IMR-90 (cell line): ENCODE measurements at regions of chr13 and their contacts with region 1.

Region 1: GRCh38 chr13:44577236-44578066 is 1.3 kb upstream of the TSC22D1 start:
- DNase-seq: peak; percentile 95
- ATAC-seq: peak; percentile 85
- H3K4me3 ChIP-seq: peak overlapping the region; percentile 80
- H3K27ac ChIP-seq: peak overlapping the region; percentile 91
- H3K4me1 ChIP-seq: peaks cover 24% of the 10 kb centered on the region
- H3K27me3 ChIP-seq: no peaks in the 10 kb centered on the region
- CTCF ChIP-seq: no peak
- POLR2A ChIP-seq: peak; percentile 86
- RAD21 ChIP-seq: no peak; the same call in 1 of the 2 replicates

Region 2: DNA sequence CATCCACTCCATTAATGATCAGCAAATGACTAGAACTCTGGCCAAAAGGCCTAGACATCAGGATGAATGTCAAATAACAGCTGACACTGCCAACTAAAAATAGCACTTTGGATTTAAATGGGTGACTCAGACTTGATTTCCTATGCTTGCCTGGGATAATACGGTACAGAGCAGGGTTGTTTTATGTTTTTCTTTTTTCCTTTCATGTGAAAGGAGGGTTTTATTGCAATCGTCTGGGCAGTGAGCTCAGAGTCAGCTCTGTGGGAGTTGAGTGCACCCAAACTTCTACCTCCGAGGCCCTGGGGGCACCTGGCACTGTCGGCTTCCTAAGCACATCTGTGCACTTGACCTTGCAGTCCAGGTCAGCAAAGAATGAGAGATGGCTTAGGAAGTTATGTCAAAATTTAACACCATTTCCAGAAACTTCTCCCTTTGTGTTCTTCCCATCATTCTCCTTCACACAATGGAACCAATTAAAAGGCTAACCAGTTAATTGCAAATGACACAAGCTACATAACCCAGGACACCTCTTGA is 563.6 kb before region 1 on chr13:
- CTCF ChIA-PET with region 1: no interaction called
- POLR2A ChIA-PET with region 1: no interaction called
- dilution Hi-C with region 1: no loop called
- in situ Hi-C with region 1: no loop called
- intact Hi-C with region 1: no loop called
- DNase-seq: peak; percentile 77
- ATAC-seq: peak; percentile 68
- H3K4me3 ChIP-seq: no peak overlapping the region
- H3K27ac ChIP-seq: no peak overlapping the region
- H3K4me1 ChIP-seq: 0 out of 2 replicates have a peak, but pooled peaks cover 2% of the 10 kb centered on the region
- H3K27me3 ChIP-seq: no peaks in the 10 kb centered on the region
- CTCF ChIP-seq: no peak
- POLR2A ChIP-seq: no peak
- RAD21 ChIP-seq: no peak

Region 3: DNA sequence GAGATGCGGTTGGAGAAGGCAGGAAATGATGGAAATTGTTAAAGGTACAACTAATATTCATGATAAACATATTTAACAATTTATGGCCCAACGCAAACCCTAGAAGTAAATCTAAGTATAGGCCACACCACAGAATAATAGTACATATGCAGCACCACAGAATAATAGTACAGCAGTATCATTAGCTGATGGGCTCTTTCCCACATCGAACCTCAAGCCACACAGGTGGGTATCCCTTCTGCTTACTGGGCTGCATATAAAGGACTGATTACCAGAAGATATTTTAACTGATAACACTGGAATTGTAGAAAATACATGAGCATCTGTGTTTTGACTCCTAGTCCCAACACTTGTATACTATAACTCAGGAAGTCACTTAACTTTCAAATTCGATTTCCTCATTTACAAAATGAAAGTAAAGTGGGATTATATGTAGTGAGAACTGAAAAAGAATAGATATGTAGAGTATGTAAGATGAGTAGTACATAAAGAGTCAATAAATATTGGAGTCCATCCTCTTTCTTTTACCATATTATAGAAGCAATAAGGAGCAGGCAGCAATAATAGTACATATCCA is 92.8 kb before region 1 on chr13:
- CTCF ChIA-PET with region 1: no interaction called
- POLR2A ChIA-PET with region 1: no interaction called
- dilution Hi-C with region 1: no loop called
- in situ Hi-C with region 1: no loop called
- intact Hi-C with region 1: loop called (anchors 2 kb)
- DNase-seq: no peak
- ATAC-seq: no peak; the same call in 1 of the 2 replicates
- H3K4me3 ChIP-seq: no peak overlapping the region
- H3K27ac ChIP-seq: no peak overlapping the region
- H3K4me1 ChIP-seq: peaks cover 2% of the 10 kb centered on the region; the same call in 1 of the 2 replicates
- H3K27me3 ChIP-seq: no peaks in the 10 kb centered on the region
- CTCF ChIP-seq: no peak
- POLR2A ChIP-seq: no peak
- RAD21 ChIP-seq: no peak

Region 4: DNA sequence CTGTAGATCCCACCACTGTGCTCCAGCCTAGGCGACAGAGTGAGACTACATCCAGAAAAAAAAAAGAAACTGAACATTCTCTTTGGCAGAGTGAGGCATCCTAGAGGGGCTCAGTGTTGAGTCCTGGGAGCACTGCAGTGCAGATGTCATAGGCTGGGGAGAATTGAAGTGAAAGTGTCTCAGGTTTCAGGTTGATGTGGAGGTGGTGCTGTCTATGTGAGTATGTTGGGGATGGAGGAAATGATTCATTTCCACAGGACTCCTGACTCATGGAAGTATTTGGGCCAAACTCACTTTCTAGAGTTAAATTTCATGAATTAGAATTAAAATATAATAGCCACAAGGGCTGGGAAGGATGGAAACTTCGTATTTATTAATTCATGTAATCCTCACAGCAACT is 133.1 kb after region 1 on chr13:
- CTCF ChIA-PET with region 1: no interaction called
- POLR2A ChIA-PET with region 1: no interaction called
- dilution Hi-C with region 1: no loop called
- in situ Hi-C with region 1: no loop called
- intact Hi-C with region 1: loop called (anchors 5 kb)
- DNase-seq: peak; percentile 96
- ATAC-seq: peak; percentile 59
- H3K4me3 ChIP-seq: no peak overlapping the region
- H3K27ac ChIP-seq: peak overlapping the region; percentile 68
- H3K4me1 ChIP-seq: peaks cover 12% of the 10 kb centered on the region
- H3K27me3 ChIP-seq: no peaks in the 10 kb centered on the region
- CTCF ChIP-seq: no peak
- POLR2A ChIP-seq: no peak
- RAD21 ChIP-seq: peak; percentile 12; the same call in 1 of the 2 replicates

Region 5: DNA sequence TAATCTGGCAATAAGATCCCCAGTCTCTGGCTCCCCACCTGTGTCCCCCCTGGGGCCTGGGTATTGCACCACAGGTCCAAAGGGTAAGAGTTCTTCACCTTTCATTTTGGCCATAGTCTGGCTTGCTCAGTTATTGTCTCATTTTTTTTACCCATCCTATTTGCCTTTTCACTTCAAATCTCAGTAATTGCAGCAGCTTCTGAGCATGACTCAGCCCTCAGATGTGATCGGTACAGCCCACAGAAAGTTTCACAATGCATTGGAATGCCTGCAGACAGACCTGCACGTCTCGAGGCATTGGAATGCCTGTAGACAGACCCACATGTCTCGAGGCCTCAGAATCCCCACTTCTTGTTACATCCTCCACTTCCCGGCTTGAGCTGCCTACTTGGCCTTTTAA is 238.2 kb after region 1 on chr13:
- CTCF ChIA-PET with region 1: interaction called, 3 read pairs
- POLR2A ChIA-PET with region 1: no interaction called
- dilution Hi-C with region 1: no loop called
- in situ Hi-C with region 1: no loop called
- intact Hi-C with region 1: loop called (anchors 5 kb)
- DNase-seq: peak; percentile 98
- ATAC-seq: peak; percentile 87
- H3K4me3 ChIP-seq: no peak overlapping the region
- H3K27ac ChIP-seq: peak overlapping the region; percentile 63
- H3K4me1 ChIP-seq: peaks cover 27% of the 10 kb centered on the region
- H3K27me3 ChIP-seq: no peaks in the 10 kb centered on the region
- CTCF ChIP-seq: no peak
- POLR2A ChIP-seq: no peak
- RAD21 ChIP-seq: peak; percentile 8; the same call in 1 of the 2 replicates

Region 6: GRCh38 chr13:44917589-44918325 is 340.3 kb after region 1 on chr13:
- CTCF ChIA-PET with region 1: no interaction called
- POLR2A ChIA-PET with region 1: no interaction called
- dilution Hi-C with region 1: no loop called
- in situ Hi-C with region 1: no loop called
- intact Hi-C with region 1: loop called (anchors 1 kb)
- DNase-seq: peak; percentile 97
- ATAC-seq: peak; percentile 79
- H3K4me3 ChIP-seq: peak overlapping the region; percentile 52
- H3K27ac ChIP-seq: peak overlapping the region; percentile 89
- H3K4me1 ChIP-seq: peaks cover 10% of the 10 kb centered on the region
- H3K27me3 ChIP-seq: no peaks in the 10 kb centered on the region
- CTCF ChIP-seq: peak; percentile 48
- POLR2A ChIP-seq: no peak
- RAD21 ChIP-seq: peak; percentile 65